PC-3 (cell line): ENCODE measurements at regions of chr11 and their contacts with region 1.

Region 1: GRCh38 chr11:105456950-105457349 is 152.9 kb upstream of the GRIA4 start:
- DNase-seq: no peak
- ATAC-seq: no peak
- H3K4me3 ChIP-seq: no peak overlapping the region
- H3K27ac ChIP-seq: no peak overlapping the region
- H3K4me1 ChIP-seq: no peaks in the 10 kb centered on the region
- H3K27me3 ChIP-seq: no peaks in the 10 kb centered on the region
- CTCF ChIP-seq: peak; percentile 59

Region 2: GRCh38 chr11:105443623-105444022 is 13.3 kb before region 1 on chr11:
- CTCF ChIA-PET with region 1: no interaction called
- POLR2A ChIA-PET with region 1: interaction called, 12 read pairs
- intact Hi-C with region 1: no loop called
- DNase-seq: no peak
- ATAC-seq: no peak
- H3K4me3 ChIP-seq: no peak overlapping the region
- H3K27ac ChIP-seq: no peak overlapping the region
- H3K4me1 ChIP-seq: no peaks in the 10 kb centered on the region
- H3K27me3 ChIP-seq: no peaks in the 10 kb centered on the region
- CTCF ChIP-seq: no peak

Region 3: DNA sequence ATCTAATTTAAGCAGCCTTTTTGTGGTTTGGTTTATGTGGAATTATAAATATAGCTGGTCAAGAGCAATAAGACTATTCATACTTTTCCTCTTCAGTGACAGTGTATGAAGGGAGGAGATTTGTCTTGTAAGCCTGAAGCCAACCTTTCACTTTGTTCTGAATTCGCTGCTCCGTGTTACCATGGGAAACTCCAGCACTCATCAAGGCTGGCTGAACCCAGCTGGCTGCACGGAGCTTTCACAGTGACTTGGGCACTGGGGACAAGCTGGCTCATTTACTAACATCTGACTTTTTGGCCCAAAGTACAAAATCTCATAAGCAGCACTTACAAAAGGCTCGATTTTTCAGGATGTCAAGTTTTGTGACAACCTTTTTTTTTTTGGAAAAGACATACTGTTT is 32.5 kb after region 1 on chr11:
- CTCF ChIA-PET with region 1: no interaction called
- POLR2A ChIA-PET with region 1: no interaction called
- intact Hi-C with region 1: no loop called
- DNase-seq: no peak
- ATAC-seq: no peak
- H3K4me3 ChIP-seq: no peak overlapping the region
- H3K27ac ChIP-seq: no peak overlapping the region
- H3K4me1 ChIP-seq: no peaks in the 10 kb centered on the region
- H3K27me3 ChIP-seq: 0 out of 2 replicates have a peak, but pooled peaks cover 3% of the 10 kb centered on the region
- CTCF ChIP-seq: no peak

Region 4: GRCh38 chr11:105767931-105768330 is 311.0 kb after region 1 on chr11:
- CTCF ChIA-PET with region 1: no interaction called
- POLR2A ChIA-PET with region 1: no interaction called
- intact Hi-C with region 1: no loop called
- DNase-seq: no peak
- ATAC-seq: no peak
- H3K4me3 ChIP-seq: no peak overlapping the region
- H3K27ac ChIP-seq: no peak overlapping the region
- H3K4me1 ChIP-seq: no peaks in the 10 kb centered on the region
- H3K27me3 ChIP-seq: no peaks in the 10 kb centered on the region
- CTCF ChIP-seq: no peak